Transverse colon (tissue), 4 donors: ENCODE measurements at regions of chr11 and their contacts with region 1.

Region 1: GRCh38 chr11:79813586-79813985 is 372.8 kb upstream of the TENM4 start:
- DNase-seq: no peak
- H3K4me3 ChIP-seq: no peak overlapping the region
- H3K27ac ChIP-seq: no peak overlapping the region
- H3K4me1 ChIP-seq: no peaks in the 10 kb centered on the region
- H3K27me3 ChIP-seq: no peaks in the 10 kb centered on the region
- CTCF ChIP-seq: no peak
- EP300 ChIP-seq: no peak
- POLR2A ChIP-seq: no peak

Region 2: DNA sequence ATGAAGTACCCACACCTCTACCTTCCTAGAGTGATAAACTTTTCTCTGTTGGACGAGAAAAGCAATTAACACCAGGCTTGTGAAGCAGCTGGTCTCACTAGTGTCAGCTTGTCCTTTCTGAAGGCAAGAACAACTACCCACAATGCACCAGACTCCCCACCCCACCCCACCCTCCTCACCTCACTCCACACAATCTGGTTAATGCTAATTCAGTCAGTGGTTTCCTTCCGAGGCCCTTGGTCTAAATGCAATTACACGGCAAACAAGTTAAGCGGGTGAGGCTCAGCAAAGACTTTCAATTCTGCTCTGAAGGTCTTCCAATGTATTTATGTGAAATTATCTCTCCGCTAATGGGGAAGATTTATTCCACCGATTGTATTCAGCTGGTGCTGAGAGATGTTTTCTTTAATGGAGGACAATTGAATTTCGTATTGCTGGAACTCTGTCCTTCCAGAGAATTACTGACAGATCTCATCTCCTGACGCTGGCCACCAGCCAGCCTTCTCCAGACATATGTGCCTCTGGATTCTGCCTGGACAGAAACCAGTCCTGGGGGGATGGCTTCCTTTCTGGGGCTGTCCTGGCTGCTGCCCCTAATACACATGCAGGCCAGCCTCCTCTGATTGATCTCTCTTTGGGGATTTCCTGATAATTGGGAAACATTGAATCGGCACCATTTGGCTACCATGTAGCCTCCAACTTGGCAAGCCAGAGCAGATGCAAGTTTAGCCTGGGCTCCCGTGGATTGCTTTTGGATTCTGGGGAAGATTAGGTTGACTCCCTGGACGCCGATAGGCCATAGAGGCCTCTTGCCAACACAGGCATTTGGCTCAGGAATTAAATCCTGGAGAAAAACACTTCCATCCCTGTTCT is 1073.2 kb before region 1 on chr11:
- in situ Hi-C with region 1: no loop called
- intact Hi-C with region 1: no loop called
- DNase-seq: peak; percentile 30
- H3K4me3 ChIP-seq: no peak overlapping the region
- H3K27ac ChIP-seq: peak overlapping the region in 3 of 4 donors; percentile 45 to 69 (median 55)
- H3K4me1 ChIP-seq: peaks cover 4 to 29% (median 13%) of the 10 kb centered on the region in 4 donors
- H3K27me3 ChIP-seq: no peaks in the 10 kb centered on the region
- CTCF ChIP-seq: no peak
- EP300 ChIP-seq: no peak
- POLR2A ChIP-seq: no peak

Region 3: GRCh38 chr11:79864882-79865281 is 51.3 kb after region 1 on chr11:
- in situ Hi-C with region 1: loop called in 1 of 4 experiments (anchors 10 kb)
- intact Hi-C with region 1: no loop called
- DNase-seq: peak; percentile 63
- H3K4me3 ChIP-seq: no peak overlapping the region
- H3K27ac ChIP-seq: no peak overlapping the region
- H3K4me1 ChIP-seq: peaks cover 0 to 5% (median 4%) of the 10 kb centered on the region in 4 donors
- H3K27me3 ChIP-seq: no peaks in the 10 kb centered on the region
- CTCF ChIP-seq: no peak
- EP300 ChIP-seq: no peak
- POLR2A ChIP-seq: no peak